ENCODE measurements at regions of chr4 and their contacts with region 1.

Region 1: DNA sequence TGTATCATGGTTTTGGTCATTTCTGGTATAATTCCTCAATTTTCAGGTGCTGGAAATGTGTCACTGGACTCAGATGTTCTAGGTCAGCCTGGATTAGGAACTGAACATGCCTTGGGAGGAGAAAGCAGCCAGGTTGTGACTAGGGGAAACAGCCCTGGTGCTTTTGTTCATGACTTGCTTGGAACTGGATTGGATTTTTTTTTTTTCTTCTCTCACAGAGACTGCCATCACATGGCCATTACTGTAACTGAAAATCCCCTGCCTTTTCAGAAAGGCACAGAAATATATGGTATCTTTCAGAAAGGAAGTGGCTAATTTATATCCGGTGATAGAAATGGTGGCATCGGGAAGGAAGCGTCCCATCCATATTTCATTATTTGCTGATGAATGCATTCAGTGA is 34.6 kb downstream of the SEPTIN11 start:
- DNase-seq: no peak
- H3K4me3 ChIP-seq: no peak overlapping the region
- H3K27ac ChIP-seq: no peak overlapping the region
- H3K4me1 ChIP-seq: peaks cover 15% of the 10 kb centered on the region
- H3K27me3 ChIP-seq: no peaks in the 10 kb centered on the region
- CTCF ChIP-seq: 0 out of 2 replicates have a peak, but pooled peaks have one; percentile 30

Region 2: GRCh38 chr4:75948822-75949444 is 1035.2 kb before region 1 on chr4:
- CTCF ChIA-PET with region 1: no interaction called
- POLR2A ChIA-PET with region 1: no interaction called
- intact Hi-C with region 1: no loop called
- DNase-seq: no peak
- H3K4me3 ChIP-seq: no peak overlapping the region
- H3K27ac ChIP-seq: no peak overlapping the region
- H3K4me1 ChIP-seq: no peaks in the 10 kb centered on the region
- H3K27me3 ChIP-seq: no peaks in the 10 kb centered on the region
- CTCF ChIP-seq: no peak

Region 3: GRCh38 chr4:76836860-76837562 is 147.1 kb before region 1 on chr4:
- CTCF ChIA-PET with region 1: interaction called, 10 read pairs
- POLR2A ChIA-PET with region 1: no interaction called
- intact Hi-C with region 1: no loop called
- DNase-seq: no peak
- H3K4me3 ChIP-seq: no peak overlapping the region
- H3K27ac ChIP-seq: no peak overlapping the region
- H3K4me1 ChIP-seq: no peaks in the 10 kb centered on the region
- H3K27me3 ChIP-seq: no peaks in the 10 kb centered on the region
- CTCF ChIP-seq: no peak

Region 4: DNA sequence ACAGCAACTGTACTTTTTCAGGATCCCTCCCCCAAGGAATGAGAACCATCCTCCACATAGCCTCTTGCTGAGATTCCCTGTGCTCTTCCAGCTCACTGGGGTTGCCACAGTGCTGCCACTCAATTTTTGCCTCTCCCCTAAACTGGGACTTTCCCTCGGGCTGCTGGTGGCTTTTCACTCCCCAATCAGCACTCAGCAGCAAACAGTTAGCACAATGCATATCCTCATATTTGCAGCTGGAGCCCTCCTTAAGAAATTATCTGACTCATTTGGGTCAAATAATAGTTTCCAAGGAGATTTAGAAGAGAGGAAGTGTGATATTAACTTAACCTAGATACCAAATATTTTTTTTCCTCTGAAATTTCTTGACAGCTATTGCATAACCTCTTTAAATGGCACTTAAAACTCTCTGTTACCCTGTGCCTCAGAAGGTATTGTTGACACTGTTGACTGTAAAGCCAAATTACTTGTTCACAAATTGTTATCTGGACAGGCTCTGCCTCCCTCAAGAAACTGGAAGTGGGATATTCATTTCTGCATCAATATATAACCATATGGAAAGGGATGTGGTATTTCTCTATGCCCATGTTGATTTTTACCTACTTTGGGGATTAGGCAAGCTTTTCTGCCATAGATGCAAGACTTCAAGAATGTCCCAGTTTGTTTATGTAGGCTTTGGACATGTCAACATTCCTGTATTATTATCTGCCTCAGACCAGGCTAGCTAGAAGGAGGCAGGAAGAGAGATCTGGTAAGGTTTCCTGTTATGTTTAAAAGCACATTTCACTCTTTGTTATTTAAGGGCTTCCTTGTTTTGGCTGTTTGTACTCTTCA is 23.4 kb after region 1 on chr4:
- CTCF ChIA-PET with region 1: no interaction called
- POLR2A ChIA-PET with region 1: no interaction called
- intact Hi-C with region 1: no loop called
- DNase-seq: peak; percentile 28 to 73
- H3K4me3 ChIP-seq: no peak overlapping the region
- H3K27ac ChIP-seq: 0 out of 2 replicates have a peak overlapping the region, but pooled peaks have one; percentile 26
- H3K4me1 ChIP-seq: peaks cover 17% of the 10 kb centered on the region
- H3K27me3 ChIP-seq: no peaks in the 10 kb centered on the region
- CTCF ChIP-seq: no peak

Measured in PC-9 (cell line).